Mammary epithelial cell (primary cell): ENCODE measurements at regions of chr6 and their contacts with region 1.

Region 1: DNA sequence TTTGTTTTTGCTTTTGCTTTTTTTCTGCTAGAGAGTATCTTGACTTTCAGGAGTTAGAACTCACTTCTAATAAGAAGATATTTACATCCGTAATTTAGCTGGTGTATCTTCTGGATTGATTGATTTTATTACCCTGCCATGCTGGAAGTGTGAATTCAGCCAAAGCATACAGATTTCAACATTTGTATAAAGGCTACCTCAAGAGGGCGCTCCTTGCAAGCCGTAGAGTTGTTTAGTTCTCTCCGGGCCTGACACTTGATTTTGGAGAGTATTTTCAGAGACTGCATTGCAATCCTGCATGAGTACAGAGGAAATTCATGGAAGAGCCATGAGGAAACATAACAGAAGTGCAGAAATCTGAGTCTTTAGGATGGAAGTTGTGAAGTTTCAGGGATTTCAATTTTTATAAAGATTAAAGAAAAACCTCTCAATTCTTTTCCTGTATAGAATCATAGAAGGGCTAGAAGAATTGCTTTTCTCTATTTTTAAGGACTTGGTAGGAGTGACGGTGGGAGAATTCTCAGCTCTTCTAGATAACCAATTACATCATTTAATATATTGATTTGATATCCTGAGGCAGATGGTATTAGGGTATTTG is 66.7 kb upstream of the TIAM2 start:
- DNase-seq: peak; percentile 42
- H3K4me3 ChIP-seq: no peak overlapping the region
- H3K27ac ChIP-seq: no peak overlapping the region
- H3K4me1 ChIP-seq: peaks cover 16% of the 10 kb centered on the region
- H3K27me3 ChIP-seq: no peaks in the 10 kb centered on the region
- CTCF ChIP-seq: peak; percentile 72 to 81

Region 2: GRCh38 chr6:154675602-154676088 is 252.8 kb before region 1 on chr6:
- CTCF ChIA-PET with region 1: no interaction called
- dilution Hi-C with region 1: no loop called
- in situ Hi-C with region 1: no loop called
- intact Hi-C with region 1: loop called (anchors 1 kb)
- DNase-seq: peak; percentile 86
- H3K4me3 ChIP-seq: no peak overlapping the region
- H3K27ac ChIP-seq: no peak overlapping the region
- H3K4me1 ChIP-seq: no peaks in the 10 kb centered on the region
- H3K27me3 ChIP-seq: no peaks in the 10 kb centered on the region
- CTCF ChIP-seq: peak; percentile 100

Region 3: DNA sequence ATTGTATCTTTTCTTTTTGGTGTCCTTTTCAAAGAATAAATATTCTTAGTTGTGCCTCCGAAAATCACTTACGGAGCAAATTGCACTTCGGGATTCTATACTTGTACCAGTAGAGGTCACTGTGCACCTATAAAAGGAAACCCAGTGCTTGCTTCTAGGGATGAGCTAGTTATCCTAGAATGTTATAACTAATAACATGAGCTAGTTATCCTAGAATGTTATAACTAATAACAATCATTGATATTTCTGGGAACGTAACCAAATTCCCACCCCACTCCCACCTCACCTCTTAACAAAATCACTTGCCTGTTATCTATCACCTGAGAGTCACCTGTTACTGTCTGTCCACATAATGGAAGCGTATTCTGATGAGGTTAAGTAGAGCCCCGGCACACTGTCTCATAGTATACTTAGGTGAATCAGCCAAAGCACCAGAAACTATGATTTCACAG is 60.3 kb before region 1 on chr6:
- CTCF ChIA-PET with region 1: interaction called, 12 read pairs
- dilution Hi-C with region 1: no loop called
- in situ Hi-C with region 1: no loop called
- intact Hi-C with region 1: loop called (anchors 1 kb)
- DNase-seq: peak; percentile 40
- H3K4me3 ChIP-seq: no peak overlapping the region
- H3K27ac ChIP-seq: no peak overlapping the region
- H3K4me1 ChIP-seq: no peaks in the 10 kb centered on the region
- H3K27me3 ChIP-seq: no peaks in the 10 kb centered on the region
- CTCF ChIP-seq: peak; percentile 50 to 70

Region 4: DNA sequence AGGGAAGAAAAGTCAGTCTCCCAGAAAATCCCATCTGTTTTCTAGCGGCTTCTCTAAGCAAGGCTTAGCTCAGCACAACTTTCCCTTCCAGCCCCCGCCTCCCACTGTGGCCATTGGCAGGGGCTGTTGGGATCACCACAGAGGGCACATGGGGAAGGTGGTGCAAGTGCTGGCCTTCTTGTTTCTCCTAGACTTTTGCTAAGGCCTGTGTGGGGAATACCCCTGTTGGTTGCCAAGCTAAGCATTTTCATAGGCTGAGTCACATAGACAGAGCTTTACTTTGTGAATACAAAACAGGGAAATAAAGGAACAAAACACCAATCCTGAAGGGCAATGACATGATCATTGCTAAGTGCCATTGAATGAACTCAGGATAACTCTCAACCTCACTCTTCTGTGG is 34.3 kb after region 1 on chr6:
- CTCF ChIA-PET with region 1: no interaction called
- dilution Hi-C with region 1: no loop called
- in situ Hi-C with region 1: no loop called
- intact Hi-C with region 1: no loop called
- DNase-seq: peak; percentile 62
- H3K4me3 ChIP-seq: no peak overlapping the region
- H3K27ac ChIP-seq: no peak overlapping the region
- H3K4me1 ChIP-seq: peaks cover 4% of the 10 kb centered on the region
- H3K27me3 ChIP-seq: no peaks in the 10 kb centered on the region
- CTCF ChIP-seq: no peak

Region 5: DNA sequence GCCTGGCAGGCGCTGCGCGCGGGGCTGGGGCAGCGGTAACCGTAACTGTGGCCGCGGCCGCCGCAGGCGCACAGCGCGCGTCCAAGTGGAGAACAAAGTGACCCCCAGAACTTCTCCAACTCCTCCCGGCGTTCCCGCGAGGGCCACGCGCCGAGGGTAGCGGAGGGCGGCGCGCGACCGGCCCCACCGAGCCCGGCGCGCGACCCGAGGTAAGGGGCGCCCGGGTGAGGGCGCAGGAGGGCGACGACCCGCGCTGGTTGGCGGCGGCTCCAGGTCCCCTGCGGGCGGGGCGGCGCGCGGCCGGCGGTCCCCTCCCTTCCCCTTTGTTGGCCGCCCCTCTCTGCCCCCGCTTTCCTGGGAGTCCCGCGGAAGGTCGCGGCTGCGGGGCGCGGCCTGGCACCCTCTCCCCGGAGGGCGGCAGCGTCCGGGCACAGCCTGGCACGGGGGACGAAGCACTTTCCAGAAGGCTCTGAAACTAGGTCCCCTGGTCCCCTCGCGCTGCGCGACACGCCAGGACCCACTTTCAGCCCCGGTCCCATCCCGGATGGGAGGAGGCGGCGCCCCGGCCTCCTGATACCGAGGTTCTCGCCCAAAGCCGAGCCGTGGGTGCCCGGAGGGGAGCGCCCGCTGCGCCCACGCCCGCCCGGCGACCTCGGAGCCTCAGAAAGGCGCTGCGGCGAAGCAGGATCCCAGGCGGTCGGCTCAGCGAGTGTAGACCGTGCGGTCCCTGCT is 67.0 kb after region 1 on chr6 and contains the start of gene TIAM2:
- CTCF ChIA-PET with region 1: no interaction called
- dilution Hi-C with region 1: no loop called
- in situ Hi-C with region 1: no loop called
- intact Hi-C with region 1: loop called (anchors 1 kb)
- DNase-seq: no peak
- H3K4me3 ChIP-seq: peak within 1 kb of the TSS; percentile 50 to 57 (median 55)
- H3K27ac ChIP-seq: no peak within 1 kb of the TSS
- H3K4me1 ChIP-seq: peaks cover 8% of the 10 kb centered on the region
- H3K27me3 ChIP-seq: peaks cover 3% of the 10 kb centered on the region
- CTCF ChIP-seq: no peak
- total RNA-seq, gene TIAM2: 4.0 to 13.3 TPM

Region 6: DNA sequence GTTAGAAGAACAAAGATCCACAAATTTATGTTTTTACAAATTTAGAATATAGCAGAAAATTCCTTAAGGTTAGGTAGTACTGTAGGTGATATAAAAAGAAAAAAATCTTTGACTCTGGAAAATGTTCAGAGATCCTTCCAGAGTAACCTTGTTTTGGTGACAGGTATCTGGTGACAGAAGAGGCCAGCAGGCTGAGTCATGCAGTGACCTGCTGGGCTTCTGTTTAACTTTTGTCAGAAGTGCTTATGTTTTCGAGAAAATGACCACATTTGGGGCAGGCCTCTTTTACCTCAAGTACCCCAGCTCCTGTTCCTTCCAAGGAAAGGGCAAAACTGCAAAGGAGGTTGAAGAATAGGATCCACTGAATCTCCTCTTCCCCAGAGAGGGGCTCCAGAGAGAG is 324.9 kb after region 1 on chr6:
- CTCF ChIA-PET with region 1: no interaction called
- dilution Hi-C with region 1: loop called (anchors 5 kb)
- in situ Hi-C with region 1: loop called (anchors 10 kb)
- intact Hi-C with region 1: loop called (anchors 2 kb)
- DNase-seq: no peak
- H3K4me3 ChIP-seq: no peak overlapping the region
- H3K27ac ChIP-seq: no peak overlapping the region
- H3K4me1 ChIP-seq: no peaks in the 10 kb centered on the region
- H3K27me3 ChIP-seq: no peaks in the 10 kb centered on the region
- CTCF ChIP-seq: no peak